Mammary epithelial cell (primary cell): ENCODE measurements at regions of chr7 and their contacts with region 1.

Region 1: GRCh38 chr7:120987683-120988590 is 574 bp upstream of the CPED1 start:
- DNase-seq: peak; percentile 77
- H3K4me3 ChIP-seq: peak overlapping the region; percentile 32 to 40 (median 36)
- H3K27ac ChIP-seq: no peak overlapping the region
- H3K4me1 ChIP-seq: peaks cover 12% of the 10 kb centered on the region
- H3K27me3 ChIP-seq: no peaks in the 10 kb centered on the region
- CTCF ChIP-seq: peak; percentile 94 to 95

Region 2: GRCh38 chr7:121107923-121108498 is 120.1 kb after region 1 on chr7:
- CTCF ChIA-PET with region 1: interaction called, 5 read pairs
- dilution Hi-C with region 1: no loop called
- in situ Hi-C with region 1: no loop called
- intact Hi-C with region 1: loop called (anchors 1 kb)
- DNase-seq: peak; percentile 50
- H3K4me3 ChIP-seq: no peak overlapping the region
- H3K27ac ChIP-seq: no peak overlapping the region
- H3K4me1 ChIP-seq: peaks cover 3% of the 10 kb centered on the region
- H3K27me3 ChIP-seq: no peaks in the 10 kb centered on the region
- CTCF ChIP-seq: peak; percentile 75 to 78

Region 3: DNA sequence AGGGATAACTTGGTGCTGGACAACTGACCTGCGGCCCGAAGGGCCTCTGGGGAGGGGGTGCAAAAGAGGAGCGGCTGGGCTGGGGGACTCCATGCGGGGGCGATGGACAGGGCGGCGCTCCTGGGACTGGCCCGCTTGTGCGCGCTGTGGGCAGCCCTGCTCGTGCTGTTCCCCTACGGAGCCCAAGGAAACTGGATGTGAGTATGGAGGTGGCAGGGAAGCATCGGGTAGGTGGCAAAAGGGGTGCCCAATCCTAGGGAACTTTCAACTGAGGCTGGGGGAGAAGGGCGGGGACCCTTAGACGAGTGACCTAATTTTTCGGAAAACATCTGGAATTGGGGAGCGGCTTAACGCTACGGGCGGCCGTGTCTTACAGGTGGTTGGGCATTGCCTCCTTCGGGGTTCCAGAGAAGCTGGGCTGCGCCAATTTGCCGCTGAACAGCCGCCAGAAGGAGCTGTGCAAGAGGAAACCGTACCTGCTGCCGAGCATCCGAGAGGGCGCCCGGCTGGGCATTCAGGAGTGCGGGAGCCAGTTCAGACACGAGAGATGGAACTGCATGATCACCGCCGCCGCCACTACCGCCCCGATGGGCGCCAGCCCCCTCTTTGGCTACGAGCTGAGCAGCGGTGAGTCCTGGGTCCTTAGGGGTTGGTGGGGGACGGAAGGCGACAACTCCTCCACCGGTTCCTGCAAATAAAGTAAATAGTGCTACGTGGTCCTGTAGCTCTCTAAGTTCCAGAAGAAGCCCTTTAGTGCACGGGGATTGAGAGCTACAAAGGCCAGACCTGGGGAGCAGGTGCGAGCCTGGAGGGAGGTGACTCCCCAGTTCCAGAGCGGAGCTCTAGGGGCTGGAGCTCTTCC is 341.5 kb after region 1 on chr7:
- CTCF ChIA-PET with region 1: no interaction called
- dilution Hi-C with region 1: no loop called
- in situ Hi-C with region 1: loop called in 1 of 2 experiments (anchors 25 kb)
- intact Hi-C with region 1: loop called (anchors 5 kb)
- DNase-seq: peak; percentile 37
- H3K4me3 ChIP-seq: peak overlapping the region; percentile 40 to 45 (median 41)
- H3K27ac ChIP-seq: no peak overlapping the region
- H3K4me1 ChIP-seq: peaks cover 16% of the 10 kb centered on the region
- H3K27me3 ChIP-seq: peaks cover 4% of the 10 kb centered on the region
- CTCF ChIP-seq: peak in 1 of 2 donors; percentile 46